A673 (cell line): ENCODE measurements at regions of chr18 and their contacts with region 1.

Region 1: GRCh38 chr18:61893971-61894750 is 1.4 kb upstream of the RNF152 start:
- DNase-seq: peak; percentile 85
- H3K4me3 ChIP-seq: peak overlapping the region; percentile 78
- H3K27ac ChIP-seq: no peak overlapping the region
- H3K4me1 ChIP-seq: no peaks in the 10 kb centered on the region
- H3K27me3 ChIP-seq: no peaks in the 10 kb centered on the region
- CTCF ChIP-seq: peak; percentile 28; the same call in 1 of the 2 replicates

Region 2: GRCh38 chr18:61551586-61551985 is 342.6 kb before region 1 on chr18:
- CTCF ChIA-PET with region 1: no interaction called
- POLR2A ChIA-PET with region 1: no interaction called
- intact Hi-C with region 1: loop called (anchors 2 kb)
- DNase-seq: peak; percentile 83
- H3K4me3 ChIP-seq: no peak overlapping the region
- H3K27ac ChIP-seq: no peak overlapping the region
- H3K4me1 ChIP-seq: peaks cover 3% of the 10 kb centered on the region
- H3K27me3 ChIP-seq: no peaks in the 10 kb centered on the region
- CTCF ChIP-seq: peak; percentile 87

Region 3: DNA sequence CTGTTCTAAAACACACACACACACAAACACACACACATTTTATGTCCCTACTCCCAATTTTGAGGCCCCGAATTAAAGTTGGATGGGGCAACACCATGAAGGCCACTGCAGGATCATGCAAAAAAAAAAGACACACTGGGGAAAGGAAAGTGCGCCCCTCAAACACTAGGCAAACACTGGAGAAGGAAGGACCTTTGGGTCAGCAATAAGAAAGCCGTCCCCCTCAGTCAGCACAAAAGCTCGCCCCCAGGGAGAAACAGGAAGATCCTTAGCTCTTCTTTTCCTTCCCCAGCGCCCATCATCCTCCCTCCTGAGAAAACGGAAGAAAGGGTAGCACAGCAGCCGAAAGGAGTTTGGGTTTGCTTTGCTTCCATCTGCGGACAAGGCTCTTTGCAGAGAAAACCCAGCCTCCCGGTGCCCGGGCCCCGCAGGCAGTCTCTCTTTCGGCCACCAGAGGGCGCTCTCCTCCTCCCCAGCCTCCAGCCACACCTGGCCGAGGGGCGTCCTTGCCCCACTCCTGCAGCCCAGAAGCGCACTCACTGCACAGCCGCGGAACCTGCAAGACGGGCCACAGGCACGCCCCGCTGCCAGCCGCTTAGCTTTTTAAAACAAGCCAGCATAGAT is 312.5 kb before region 1 on chr18:
- CTCF ChIA-PET with region 1: no interaction called
- POLR2A ChIA-PET with region 1: no interaction called
- intact Hi-C with region 1: loop called (anchors 2 kb)
- DNase-seq: peak; percentile 79
- H3K4me3 ChIP-seq: peak overlapping the region; percentile 43
- H3K27ac ChIP-seq: no peak overlapping the region
- H3K4me1 ChIP-seq: peaks cover 1% of the 10 kb centered on the region
- H3K27me3 ChIP-seq: no peaks in the 10 kb centered on the region
- CTCF ChIP-seq: peak; percentile 99

Region 4: DNA sequence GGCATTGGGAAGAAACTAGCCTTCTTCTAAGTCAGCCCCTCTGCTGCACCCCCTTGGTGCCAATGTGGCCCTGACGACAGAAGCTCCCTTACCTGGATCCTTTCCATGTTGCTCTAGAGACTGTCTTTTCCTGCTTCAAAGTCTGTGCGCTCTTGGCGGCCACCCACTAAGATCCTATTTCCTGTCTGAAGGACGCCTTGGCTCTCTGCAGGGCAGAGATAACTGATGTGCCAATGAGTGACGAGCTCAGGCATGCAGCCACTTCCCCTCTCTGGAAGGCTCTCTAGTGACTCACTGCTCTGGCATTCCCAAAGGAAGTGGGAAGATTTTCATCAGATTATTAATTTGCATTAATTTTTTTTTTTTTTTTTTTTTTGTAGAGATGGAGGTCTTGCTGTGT is 287.4 kb before region 1 on chr18:
- CTCF ChIA-PET with region 1: interaction called, 10 read pairs
- POLR2A ChIA-PET with region 1: no interaction called
- intact Hi-C with region 1: no loop called
- DNase-seq: peak; percentile 99
- H3K4me3 ChIP-seq: peak overlapping the region; percentile 34
- H3K27ac ChIP-seq: peak overlapping the region; percentile 93
- H3K4me1 ChIP-seq: peaks cover 43% of the 10 kb centered on the region
- H3K27me3 ChIP-seq: no peaks in the 10 kb centered on the region
- CTCF ChIP-seq: no peak